ENCODE measurements at regions of chr11 and their contacts with region 1.

Region 1: DNA sequence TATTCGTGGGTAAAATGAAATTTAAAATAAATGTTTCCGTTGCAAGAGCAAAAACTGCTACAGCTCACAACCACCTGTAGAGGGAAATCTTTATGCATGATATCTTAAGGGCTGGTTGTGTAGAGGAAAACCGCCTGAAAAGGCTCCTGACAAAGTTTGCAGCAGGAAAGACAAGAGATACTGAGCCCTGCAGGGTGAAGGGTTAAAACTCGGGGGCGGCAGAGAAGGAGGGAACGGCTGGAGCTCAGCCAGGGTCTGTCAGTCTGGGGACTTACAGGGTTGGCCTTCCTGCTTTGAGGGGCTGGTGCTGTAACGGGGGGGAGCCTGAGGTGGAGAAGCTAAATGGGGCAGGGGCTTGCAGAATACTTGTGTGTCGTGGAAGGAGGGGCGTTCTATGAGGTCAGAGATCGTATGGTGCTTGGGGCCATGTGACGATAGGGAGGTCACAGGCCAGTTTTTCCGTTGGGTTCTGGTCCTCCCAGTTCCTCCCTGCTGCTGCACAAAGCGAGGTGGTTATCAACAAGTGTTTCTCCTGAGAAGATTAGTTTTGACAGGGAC is 122.9 kb upstream of the HSD17B12 start:
- DNase-seq: peak in 1 of 5 donors; percentile 24
- ATAC-seq: peak in 1 of 4 donors; percentile 43
- H3K4me3 ChIP-seq: no peak overlapping the region
- H3K27ac ChIP-seq: no peak overlapping the region
- H3K4me1 ChIP-seq: peaks cover 0 to 26% (median 10%) of the 10 kb centered on the region in 12 donors
- H3K27me3 ChIP-seq: peaks cover 6 to 74% (median 26%) of the 10 kb centered on the region in 9 donors
- CTCF ChIP-seq: peak in 9 of 12 donors; percentile 10 to 50 (median 27)
- POLR2A ChIP-seq: no peak

Region 2: DNA sequence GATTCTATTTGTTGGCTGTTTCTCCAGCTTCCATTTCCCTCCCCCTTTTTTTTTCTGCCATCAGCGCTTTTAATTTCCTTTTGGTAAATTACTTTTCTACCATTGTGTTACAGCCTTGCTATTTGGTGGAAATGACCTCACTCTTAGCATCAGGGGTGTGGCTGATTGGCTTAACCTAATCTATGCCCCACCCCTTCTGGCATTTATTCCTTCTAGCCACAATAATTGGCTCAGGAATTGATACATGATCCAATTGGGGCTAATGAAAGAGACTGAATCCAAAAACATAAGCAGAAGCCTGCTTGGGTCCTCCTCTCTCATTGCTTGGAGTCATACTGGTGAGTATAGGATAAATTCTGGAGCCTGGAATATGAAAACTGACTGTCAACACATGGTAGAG is 1695.8 kb before region 1 on chr11:
- intact Hi-C with region 1: no loop called
- DNase-seq: no peak
- ATAC-seq: peak in 1 of 4 donors; percentile 45
- H3K4me3 ChIP-seq: no peak overlapping the region
- H3K27ac ChIP-seq: no peak overlapping the region
- H3K4me1 ChIP-seq: no peaks in the 10 kb centered on the region
- H3K27me3 ChIP-seq: no peaks in the 10 kb centered on the region
- CTCF ChIP-seq: no peak
- POLR2A ChIP-seq: no peak

Region 3: DNA sequence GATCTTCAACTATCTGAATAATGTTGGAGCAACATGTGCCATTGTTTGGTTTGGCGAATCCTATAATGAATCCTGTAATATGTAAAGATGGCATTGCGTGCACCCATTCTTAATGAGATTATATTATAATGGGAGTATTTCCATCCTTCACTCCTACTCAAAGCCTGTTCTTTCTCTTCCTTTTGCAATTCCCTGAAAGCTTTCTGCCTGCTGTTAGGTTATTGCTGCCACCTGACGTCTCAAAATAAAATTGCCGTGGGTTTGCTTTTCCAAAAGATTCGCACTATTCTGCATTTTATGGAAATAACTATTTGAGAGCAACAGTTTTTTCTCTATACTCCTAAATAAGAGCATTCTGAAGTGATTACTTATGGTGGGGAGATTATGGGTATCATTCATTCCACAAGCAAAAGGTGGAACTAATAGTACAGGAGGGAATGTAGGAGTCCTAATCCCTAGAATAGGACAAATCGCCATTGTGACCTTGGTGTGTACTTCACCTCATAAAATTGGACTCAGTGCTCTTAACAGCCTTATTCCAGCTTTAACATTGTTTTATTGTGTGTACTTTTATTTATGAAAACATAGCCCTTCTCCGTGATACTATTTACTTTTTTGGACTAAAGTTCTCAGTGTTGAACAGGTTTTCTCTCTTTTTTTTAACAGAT is 253.4 kb after region 1 on chr11:
- intact Hi-C with region 1: loop called in 2 of 10 experiments (anchors 5 to 10 kb)
- DNase-seq: no peak
- ATAC-seq: peak in 1 of 4 donors; percentile 42
- H3K4me3 ChIP-seq: no peak overlapping the region
- H3K27ac ChIP-seq: no peak overlapping the region
- H3K4me1 ChIP-seq: no peaks in the 10 kb centered on the region
- H3K27me3 ChIP-seq: no peaks in the 10 kb centered on the region
- CTCF ChIP-seq: peak; percentile 17 to 59 (median 46)
- POLR2A ChIP-seq: no peak

Region 4: GRCh38 chr11:44159848-44160721 is 602.5 kb after region 1 on chr11:
- intact Hi-C with region 1: no loop called
- DNase-seq: no peak
- ATAC-seq: no peak
- H3K4me3 ChIP-seq: no peak overlapping the region
- H3K27ac ChIP-seq: no peak overlapping the region
- H3K4me1 ChIP-seq: peaks cover 0 to 8% (median 2%) of the 10 kb centered on the region in 12 donors
- H3K27me3 ChIP-seq: no peaks in the 10 kb centered on the region
- CTCF ChIP-seq: no peak
- POLR2A ChIP-seq: no peak

Measured in heart left ventricle (tissue), 16 donors.